Right ventricle myocardium inferior (tissue), 1 donor: ENCODE measurements at regions of chr6 and their contacts with region 1.

Region 1: DNA sequence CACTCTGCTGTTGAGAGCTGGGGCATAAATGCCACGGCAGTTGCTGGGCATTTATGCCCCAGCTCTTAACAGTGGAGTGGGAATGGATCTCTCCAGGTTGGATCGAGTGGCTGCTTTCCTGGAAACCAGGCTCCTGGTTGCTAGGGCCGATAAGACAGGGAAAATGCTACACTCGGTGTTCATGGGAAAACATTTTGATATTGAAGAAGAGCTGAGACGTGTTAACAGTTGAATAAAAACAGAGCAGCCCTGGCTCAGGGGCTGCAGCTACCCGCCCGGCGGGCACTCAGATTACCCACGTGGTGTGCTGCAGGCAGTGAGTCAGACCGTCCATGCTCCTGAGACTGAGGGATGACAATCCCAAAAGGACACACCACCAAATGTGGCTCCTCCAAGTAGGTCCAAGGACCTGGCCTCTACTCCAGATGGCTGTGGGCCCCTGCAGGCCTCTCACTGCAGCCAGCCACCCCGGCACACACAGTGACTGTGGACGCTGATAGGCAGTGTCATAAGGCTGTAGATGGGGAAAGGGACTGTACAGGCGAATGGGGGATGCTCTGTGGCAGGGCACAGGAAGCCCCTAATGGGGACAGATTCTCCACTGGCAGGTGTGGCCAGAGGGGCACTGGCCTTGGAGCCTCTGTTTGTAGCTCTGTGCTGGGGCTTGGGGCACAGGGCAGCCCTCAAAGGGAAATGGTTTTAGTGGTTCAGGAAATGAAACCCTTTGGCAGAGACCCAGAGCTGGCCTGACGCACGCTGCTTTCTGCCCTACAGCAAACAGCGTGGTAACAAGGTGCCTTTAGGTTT is 237.8 kb downstream of the LY86 start:
- DNase-seq: peak; percentile 78
- ATAC-seq: peak; percentile 85

Region 2: GRCh38 chr6:6749702-6750491 is 76.4 kb before region 1 on chr6:
- intact Hi-C with region 1: loop called (anchors 5 kb)
- DNase-seq: peak; percentile 84
- ATAC-seq: peak; percentile 49

Region 3: DNA sequence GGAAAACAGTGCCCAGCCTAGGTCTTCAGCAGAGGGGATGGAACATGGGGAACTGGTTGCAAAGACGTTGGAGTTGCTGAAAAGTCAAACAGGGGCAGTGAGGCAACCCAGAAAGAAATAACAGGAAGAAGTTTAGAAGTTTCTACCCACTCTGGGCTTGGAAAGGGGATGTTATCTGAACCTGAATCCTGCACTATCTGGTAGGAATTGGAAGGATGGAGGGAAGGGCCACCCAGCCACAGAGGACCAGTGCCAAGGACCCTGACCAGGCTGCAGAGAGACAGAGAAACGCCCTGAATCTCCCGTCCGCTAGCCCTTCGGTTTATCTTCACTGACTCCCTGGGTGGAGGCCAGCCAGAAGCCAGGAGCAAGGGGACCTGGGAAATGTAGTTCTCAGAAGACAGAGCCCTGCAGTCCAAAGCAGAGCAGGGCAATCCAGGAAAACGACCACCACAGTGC is 64.1 kb after region 1 on chr6:
- intact Hi-C with region 1: loop called (anchors 5 kb)
- DNase-seq: peak; percentile 76
- ATAC-seq: peak; percentile 47

Region 4: GRCh38 chr6:6901205-6901731 is 75.0 kb after region 1 on chr6:
- intact Hi-C with region 1: no loop called
- DNase-seq: no peak
- ATAC-seq: no peak

Region 5: DNA sequence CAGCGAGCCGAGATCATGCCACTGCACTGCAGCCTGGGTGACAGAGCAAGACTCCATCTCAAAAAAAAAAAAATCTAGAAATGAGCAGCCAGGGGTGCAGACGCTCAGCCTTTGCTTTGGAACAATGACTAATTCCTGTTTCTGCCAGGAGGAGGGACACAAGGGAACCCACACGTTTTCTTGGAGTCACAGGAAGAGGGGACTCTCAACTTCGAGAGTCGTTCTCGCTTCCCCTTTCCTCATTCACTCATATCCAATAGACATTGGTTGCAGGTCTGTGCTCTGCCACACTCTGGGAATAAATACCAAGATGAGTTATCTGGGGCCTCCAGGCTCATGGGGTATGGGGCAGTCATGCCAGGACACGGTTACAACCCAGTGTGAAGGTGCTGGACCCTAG is 189.9 kb after region 1 on chr6:
- intact Hi-C with region 1: no loop called
- DNase-seq: no peak
- ATAC-seq: peak; percentile 28